Mammary epithelial cell (primary cell): ENCODE measurements at regions of chr3 and their contacts with region 1.

Region 1: GRCh38 chr3:48989796-48990635 is at the start of gene P4HTM:
- DNase-seq: peak; percentile 76
- H3K4me3 ChIP-seq: peak within 1 kb of the TSS; percentile 37 to 66 (median 61)
- H3K27ac ChIP-seq: peak within 1 kb of the TSS; percentile 38
- H3K4me1 ChIP-seq: peaks cover 30% of the 10 kb centered on the region
- H3K27me3 ChIP-seq: no peaks in the 10 kb centered on the region
- CTCF ChIP-seq: peak in 1 of 2 donors; percentile 33
- total RNA-seq, gene P4HTM: 8.1 to 10.2 TPM

Region 2: DNA sequence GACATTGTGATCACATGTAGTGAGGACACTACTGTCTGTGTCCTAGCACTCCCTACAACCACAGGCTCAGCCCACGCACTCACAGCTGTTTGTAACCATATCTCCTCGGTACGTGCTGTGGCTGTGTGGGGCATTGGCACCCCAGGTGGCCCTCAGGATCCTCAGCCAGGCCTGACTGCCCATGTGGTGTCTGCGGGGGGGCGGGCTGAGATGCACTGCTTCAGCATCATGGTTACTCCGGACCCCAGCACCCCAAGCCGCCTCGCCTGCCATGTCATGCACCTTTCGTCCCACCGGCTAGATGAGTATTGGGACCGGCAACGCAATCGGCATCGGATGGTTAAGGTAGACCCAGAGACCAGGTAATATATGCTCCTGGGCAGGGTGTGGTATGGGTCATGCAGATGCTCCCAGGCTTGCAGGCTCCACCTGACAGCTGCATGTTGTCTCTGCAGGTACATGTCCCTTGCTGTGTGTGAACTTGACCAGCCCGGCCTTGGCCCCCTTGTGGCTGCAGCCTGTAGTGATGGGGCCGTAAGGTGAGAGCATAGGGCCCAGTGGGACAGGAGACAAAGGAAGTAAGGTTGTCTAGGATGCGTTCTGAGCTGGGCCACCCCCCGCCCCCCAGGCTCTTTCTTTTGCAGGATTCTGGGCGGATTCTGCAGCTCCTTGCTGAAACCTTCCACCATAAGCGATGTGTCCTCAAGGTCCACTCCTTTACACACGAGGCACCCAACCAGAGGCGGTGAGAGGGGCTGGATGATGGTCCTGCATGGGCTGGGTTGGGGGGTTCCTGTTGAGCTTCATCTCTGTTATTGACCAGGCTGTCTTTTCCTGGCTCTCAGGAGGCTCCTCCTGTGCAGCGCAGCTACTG is 24.0 kb after region 1 on chr3:
- CTCF ChIA-PET with region 1: interaction called, 3 read pairs
- dilution Hi-C with region 1: no loop called
- in situ Hi-C with region 1: no loop called
- intact Hi-C with region 1: loop called (anchors 1 kb)
- DNase-seq: peak; percentile 41
- H3K4me3 ChIP-seq: no peak overlapping the region
- H3K27ac ChIP-seq: no peak overlapping the region
- H3K4me1 ChIP-seq: peaks cover 28% of the 10 kb centered on the region
- H3K27me3 ChIP-seq: no peaks in the 10 kb centered on the region
- CTCF ChIP-seq: peak; percentile 68 to 77

Region 3: GRCh38 chr3:49093853-49094767 is 104.1 kb after region 1 on chr3 and contains the start of gene QRICH1:
- CTCF ChIA-PET with region 1: interaction called, 11 read pairs
- dilution Hi-C with region 1: loop called (anchors 5 kb)
- in situ Hi-C with region 1: no loop called
- intact Hi-C with region 1: no loop called
- DNase-seq: peak; percentile 99
- H3K4me3 ChIP-seq: peak within 1 kb of the TSS; percentile 72 to 84 (median 80)
- H3K27ac ChIP-seq: peak within 1 kb of the TSS; percentile 90
- H3K4me1 ChIP-seq: peaks cover 11% of the 10 kb centered on the region
- H3K27me3 ChIP-seq: no peaks in the 10 kb centered on the region
- CTCF ChIP-seq: peak; percentile 65 to 66
- total RNA-seq, gene QRICH1: 88.7 to 89.7 TPM

Region 4: DNA sequence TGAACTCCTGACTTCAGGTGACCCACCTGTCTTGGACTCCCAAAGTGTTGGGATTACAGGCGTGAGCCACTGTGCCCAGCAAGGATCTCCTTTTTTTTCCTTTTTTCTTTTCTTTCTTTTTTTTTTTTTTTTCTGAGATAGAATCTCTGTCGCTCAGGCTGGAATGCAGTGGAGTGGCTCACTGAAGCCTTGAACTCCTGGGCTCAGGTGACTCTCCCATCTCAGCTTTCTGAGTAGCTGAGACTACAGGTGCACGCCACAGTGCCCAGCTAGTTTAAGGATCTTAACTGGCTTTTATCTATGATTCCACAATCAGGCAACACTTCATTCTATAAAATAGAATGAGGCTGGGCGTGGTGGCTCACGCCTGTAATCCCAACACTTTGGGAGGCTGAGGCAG is 455.4 kb after region 1 on chr3:
- CTCF ChIA-PET with region 1: interaction called, 15 read pairs
- dilution Hi-C with region 1: no loop called
- in situ Hi-C with region 1: no loop called
- intact Hi-C with region 1: loop called (anchors 2 kb)
- DNase-seq: no peak
- H3K4me3 ChIP-seq: no peak overlapping the region
- H3K27ac ChIP-seq: no peak overlapping the region
- H3K4me1 ChIP-seq: peaks cover 8% of the 10 kb centered on the region
- H3K27me3 ChIP-seq: no peaks in the 10 kb centered on the region
- CTCF ChIP-seq: no peak